ENCODE measurements at regions of chr12 and their contacts with region 1.

Region 1: GRCh38 chr12:121709478-121709961 is 3.0 kb upstream of the TMEM120B start:
- ATAC-seq: peak in 1 of 8 experiments; percentile 35
- H3K4me3 ChIP-seq: no peak overlapping the region
- H3K27ac ChIP-seq: peak overlapping the region in 1 of 2 donors; percentile 16
- H3K4me1 ChIP-seq: peaks cover 17 to 18% of the 10 kb centered on the region in 2 donors

Region 2: GRCh38 chr12:121626087-121626852 is 83.2 kb before region 1 on chr12 and contains the start of gene ORAI1:
- in situ Hi-C with region 1: no loop called
- ATAC-seq: peak; percentile 69 to 89 (median 82)
- H3K4me3 ChIP-seq: peak within 1 kb of the TSS; percentile 49 to 65 (median 53)
- H3K27ac ChIP-seq: peak within 1 kb of the TSS; percentile 58 to 72
- H3K4me1 ChIP-seq: peaks cover 2 to 13% of the 10 kb centered on the region in 2 donors
- total RNA-seq, gene ORAI1: 2.3 to 17.7 (median 4.6) TPM

Region 3: GRCh38 chr12:121773011-121773777 is 63.7 kb after region 1 on chr12:
- in situ Hi-C with region 1: loop called in 1 of 9 experiments (anchors 10 kb)
- ATAC-seq: peak; percentile 55 to 86 (median 70)
- H3K4me3 ChIP-seq: no peak overlapping the region
- H3K27ac ChIP-seq: no peak overlapping the region
- H3K4me1 ChIP-seq: peaks cover 0 to 9% of the 10 kb centered on the region in 2 donors

Region 4: DNA sequence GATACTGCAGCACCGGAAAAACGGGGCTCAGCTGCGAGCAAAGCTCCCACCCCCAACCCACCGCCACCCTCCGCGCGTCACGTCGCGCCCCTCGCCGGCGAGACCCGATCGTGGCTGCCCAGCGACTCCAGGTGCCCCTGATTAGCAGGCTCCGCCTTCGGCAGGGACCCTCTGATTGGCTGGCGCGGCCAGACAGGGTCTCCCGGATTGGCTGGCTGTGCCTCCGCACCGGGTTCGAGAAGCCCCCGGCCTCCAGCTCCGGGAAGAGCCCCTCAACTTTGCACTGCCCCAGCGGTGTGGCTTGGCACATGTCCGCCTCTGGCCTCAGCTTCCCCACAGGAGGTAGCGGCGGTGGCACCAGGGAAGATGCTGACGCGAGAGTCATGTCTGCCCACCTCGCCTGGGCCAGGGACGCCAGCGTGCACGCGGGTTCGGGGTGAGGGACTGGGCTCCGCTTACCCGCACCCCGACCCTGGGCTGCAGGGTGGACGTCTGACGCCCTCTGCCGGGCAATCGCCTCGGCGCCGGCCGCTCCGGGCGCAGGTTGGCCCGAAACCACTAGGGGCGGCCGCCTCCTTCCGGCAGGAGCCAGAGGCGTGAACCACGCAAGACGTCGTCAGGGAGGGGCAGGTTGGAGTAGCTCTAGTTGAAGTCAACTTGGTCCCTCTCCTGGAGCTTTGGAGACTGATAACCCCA is 84.5 kb after region 1 on chr12:
- in situ Hi-C with region 1: loop called in 1 of 9 experiments (anchors 10 kb)
- ATAC-seq: peak; percentile 36 to 69 (median 56)
- H3K4me3 ChIP-seq: peak overlapping the region; percentile 16 to 34 (median 28)
- H3K27ac ChIP-seq: peak overlapping the region; percentile 27 to 66
- H3K4me1 ChIP-seq: peaks cover 48 to 50% of the 10 kb centered on the region in 2 donors